ENCODE measurements at regions of chr14 and their contacts with region 1.

Region 1: DNA sequence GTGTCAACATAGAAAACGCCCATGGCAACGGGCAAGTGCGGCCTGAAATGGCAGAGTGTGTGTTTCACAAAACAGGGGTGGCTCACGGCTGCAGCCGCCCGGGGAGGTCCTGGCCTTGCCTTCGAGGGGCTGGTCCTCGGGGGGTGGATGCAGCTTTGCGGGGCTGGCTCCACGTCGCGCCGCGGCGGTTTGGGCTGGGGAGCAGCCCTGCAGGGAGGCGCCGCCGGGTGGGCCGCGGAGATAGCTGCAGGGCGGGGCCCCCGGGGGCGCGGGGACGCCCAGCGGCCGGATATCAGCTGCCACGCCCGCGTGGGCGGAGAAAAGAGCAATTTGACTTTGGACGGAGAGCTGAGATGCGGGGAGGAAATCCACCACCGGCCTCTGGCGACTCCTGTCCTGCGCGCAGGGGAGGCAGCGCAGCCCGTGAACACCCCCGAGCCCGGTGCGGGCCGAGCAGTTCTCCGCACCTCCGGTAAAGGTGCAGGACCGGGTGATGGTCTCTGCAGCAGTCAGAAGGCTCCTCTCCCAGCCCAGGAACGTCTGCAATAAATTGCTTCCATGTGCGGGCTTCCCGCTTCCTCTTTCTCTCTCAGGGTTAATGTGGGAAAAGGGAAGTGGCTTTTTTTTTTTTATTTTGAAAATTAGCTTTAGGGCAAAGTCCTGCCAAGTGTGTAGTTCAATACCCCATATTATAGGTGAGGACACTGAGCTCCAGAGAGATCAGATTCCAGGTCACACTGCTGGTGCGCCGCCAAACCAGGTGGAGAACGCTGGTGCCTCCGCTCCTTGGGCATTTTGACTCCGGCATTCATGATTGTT is 110.5 kb downstream of the ARF6 start:
- DNase-seq: peak; percentile 85
- ATAC-seq: peak; percentile 65
- H3K4me3 Mint-ChIP-seq: peak overlapping the region; percentile 83
- H3K27ac Mint-ChIP-seq: peak overlapping the region; percentile 95
- H3K4me1 Mint-ChIP-seq: peaks cover 79% of the 10 kb centered on the region
- H3K27me3 Mint-ChIP-seq: no peaks in the 10 kb centered on the region
- CTCF ChIP-seq: no peak

Region 2: DNA sequence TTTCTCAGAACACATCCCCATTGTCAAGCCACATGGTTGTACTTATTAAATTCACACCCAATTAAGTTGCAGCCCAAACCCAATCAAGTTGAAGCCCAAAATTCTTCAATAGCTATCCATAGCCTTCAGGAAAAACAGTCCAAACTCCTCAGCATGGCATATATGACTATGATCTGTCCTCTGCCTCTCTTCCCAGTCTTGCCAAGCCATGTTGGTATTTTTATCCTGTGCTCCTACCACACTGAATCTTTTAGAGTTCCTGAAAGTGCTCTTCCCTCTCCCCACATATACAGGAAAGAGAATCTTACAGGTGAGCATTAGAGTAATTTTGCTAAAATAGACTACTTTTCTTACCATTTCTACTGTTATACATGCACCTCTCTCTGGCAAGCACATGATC is 1252.1 kb before region 1 on chr14:
- CTCF ChIA-PET with region 1: no interaction called
- POLR2A ChIA-PET with region 1: no interaction called
- intact Hi-C with region 1: no loop called
- DNase-seq: no peak
- ATAC-seq: no peak
- H3K4me3 Mint-ChIP-seq: no peak overlapping the region
- H3K27ac Mint-ChIP-seq: no peak overlapping the region
- H3K4me1 Mint-ChIP-seq: no peaks in the 10 kb centered on the region
- H3K27me3 Mint-ChIP-seq: no peaks in the 10 kb centered on the region
- CTCF ChIP-seq: no peak

Region 3: DNA sequence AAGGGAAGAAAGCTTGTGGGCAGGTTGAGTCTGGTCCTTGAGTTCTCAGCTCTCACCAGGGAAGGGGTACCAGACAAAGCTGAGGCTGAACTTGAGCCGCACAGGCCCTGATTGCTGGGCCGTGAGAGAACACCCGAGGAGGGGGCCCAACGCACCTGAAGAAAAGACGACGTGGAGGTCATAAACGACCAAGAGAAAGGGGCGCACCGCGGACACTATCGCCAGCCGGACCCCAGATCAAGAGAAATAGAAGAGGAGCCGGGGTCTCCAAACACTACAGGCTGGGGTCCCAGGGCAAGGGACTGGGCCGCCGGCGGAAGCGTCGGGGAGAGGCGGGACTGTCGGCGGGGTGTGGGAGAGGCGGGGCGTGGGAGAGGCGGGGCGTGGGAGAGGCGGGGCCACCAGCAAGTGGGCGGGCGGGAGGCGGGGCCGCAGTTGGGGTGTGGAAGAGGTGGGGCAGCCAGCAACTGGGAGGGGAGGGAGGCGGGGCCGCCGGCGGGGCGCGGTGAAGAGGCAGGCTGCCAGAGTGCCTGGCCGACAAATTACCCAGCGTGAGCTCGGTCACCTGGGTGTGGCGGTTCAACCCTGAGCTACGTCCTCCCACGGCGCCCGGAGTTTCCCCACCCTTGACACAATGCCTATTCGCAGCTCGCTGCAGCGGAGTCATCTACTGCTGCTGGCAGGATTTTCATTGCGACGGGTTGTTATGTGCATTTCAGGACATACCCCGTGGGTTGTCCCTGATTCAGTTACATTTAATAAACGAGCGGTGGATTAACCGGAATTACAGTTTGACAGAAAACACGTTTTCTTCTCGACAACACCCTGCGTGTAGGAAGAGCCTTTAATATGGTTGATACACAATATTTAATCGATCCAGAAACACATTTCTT is 135.3 kb before region 1 on chr14:
- CTCF ChIA-PET with region 1: interaction called, 90 read pairs
- POLR2A ChIA-PET with region 1: interaction called, 190 read pairs
- intact Hi-C with region 1: loop called (anchors 1 kb)
- DNase-seq: peak; percentile 85
- ATAC-seq: peak; percentile 84
- H3K4me3 Mint-ChIP-seq: peak overlapping the region; percentile 95
- H3K27ac Mint-ChIP-seq: peak overlapping the region; percentile 100
- H3K4me1 Mint-ChIP-seq: peaks cover 44% of the 10 kb centered on the region
- H3K27me3 Mint-ChIP-seq: no peaks in the 10 kb centered on the region
- CTCF ChIP-seq: no peak

Region 4: GRCh38 chr14:49940808-49941421 is 62.5 kb before region 1 on chr14:
- CTCF ChIA-PET with region 1: interaction called, 3 read pairs
- POLR2A ChIA-PET with region 1: interaction called, 12 read pairs
- intact Hi-C with region 1: no loop called
- DNase-seq: no peak
- ATAC-seq: peak; percentile 42
- H3K4me3 Mint-ChIP-seq: peak overlapping the region; percentile 7
- H3K27ac Mint-ChIP-seq: peak overlapping the region; percentile 61
- H3K4me1 Mint-ChIP-seq: peaks cover 42% of the 10 kb centered on the region
- H3K27me3 Mint-ChIP-seq: no peaks in the 10 kb centered on the region
- CTCF ChIP-seq: no peak

Region 5: DNA sequence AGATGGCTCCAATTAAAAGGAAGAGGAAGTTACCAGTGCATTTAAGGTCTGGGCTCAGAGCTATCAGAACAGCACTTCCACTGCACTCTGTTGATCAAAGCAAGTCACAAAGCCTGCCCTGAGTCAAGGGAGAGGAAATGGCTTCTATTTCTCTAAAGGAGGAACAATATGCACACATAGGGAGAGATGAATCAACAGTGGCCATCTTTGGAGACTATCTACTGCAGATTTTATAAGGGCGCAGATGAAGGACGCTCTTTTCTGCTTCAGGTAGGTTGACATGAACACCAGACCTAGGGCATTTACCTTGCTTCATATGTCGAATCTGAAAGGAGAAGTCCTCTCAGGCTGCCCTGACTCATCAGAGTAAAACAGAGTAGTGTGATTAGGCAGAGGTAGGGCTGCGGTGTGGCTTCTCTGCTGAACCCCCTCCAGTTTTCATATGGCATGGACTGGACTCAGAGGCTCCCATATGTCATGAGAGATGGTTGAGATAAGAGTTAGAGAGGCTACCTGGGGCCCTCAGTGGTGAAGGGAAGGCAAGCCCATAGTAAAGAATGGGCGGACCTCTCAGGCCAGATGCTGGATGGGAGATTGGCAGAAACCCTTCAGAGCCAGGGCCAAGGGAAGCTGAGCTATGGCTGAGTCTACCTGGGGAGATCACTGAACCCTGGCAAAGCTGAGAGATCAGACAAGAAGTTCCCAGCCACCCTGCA is 26.1 kb before region 1 on chr14:
- CTCF ChIA-PET with region 1: interaction called, 17 read pairs
- POLR2A ChIA-PET with region 1: interaction called, 301 read pairs
- intact Hi-C with region 1: loop called (anchors 1 kb)
- DNase-seq: no peak
- ATAC-seq: peak; percentile 87
- H3K4me3 Mint-ChIP-seq: peak overlapping the region; percentile 76
- H3K27ac Mint-ChIP-seq: peak overlapping the region; percentile 95
- H3K4me1 Mint-ChIP-seq: peaks cover 88% of the 10 kb centered on the region
- H3K27me3 Mint-ChIP-seq: no peaks in the 10 kb centered on the region
- CTCF ChIP-seq: no peak

Region 6: DNA sequence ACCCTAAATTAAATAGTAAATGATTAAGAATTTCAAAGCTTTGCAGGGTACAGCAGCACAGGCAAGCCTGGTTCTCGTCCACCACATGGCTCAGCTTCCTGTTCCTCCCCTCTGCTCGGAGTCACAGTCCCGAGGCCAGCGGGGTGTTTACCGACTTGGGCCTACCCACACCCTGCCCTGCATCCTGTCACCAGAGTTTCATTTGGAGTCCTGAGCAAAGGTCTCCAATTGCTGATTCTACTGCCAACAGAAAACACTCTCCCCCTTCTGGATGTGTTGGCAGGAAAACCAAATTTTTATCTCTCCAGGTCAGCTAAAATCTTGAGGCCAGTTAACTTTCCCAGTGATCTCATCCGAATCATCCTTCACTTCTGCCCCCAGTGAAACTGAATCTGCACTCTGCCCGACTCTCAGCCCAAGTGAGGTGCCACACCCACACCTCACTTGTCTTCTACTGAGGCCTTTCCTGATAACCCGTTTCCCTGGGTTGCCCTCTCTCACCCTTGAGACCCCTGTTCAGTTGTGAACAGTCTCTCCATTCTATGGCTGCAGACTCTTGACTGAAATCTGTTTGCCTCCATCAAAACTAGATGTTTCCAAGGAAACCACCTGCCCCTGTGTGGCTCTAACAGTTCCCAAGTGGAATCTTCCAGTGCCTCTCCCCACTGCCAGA is 41.8 kb after region 1 on chr14:
- CTCF ChIA-PET with region 1: interaction called, 5 read pairs
- POLR2A ChIA-PET with region 1: interaction called, 32 read pairs
- intact Hi-C with region 1: no loop called
- DNase-seq: no peak
- ATAC-seq: peak; percentile 70
- H3K4me3 Mint-ChIP-seq: peak overlapping the region; percentile 2
- H3K27ac Mint-ChIP-seq: peak overlapping the region; percentile 92
- H3K4me1 Mint-ChIP-seq: peaks cover 71% of the 10 kb centered on the region
- H3K27me3 Mint-ChIP-seq: no peaks in the 10 kb centered on the region
- CTCF ChIP-seq: no peak

Region 7: DNA sequence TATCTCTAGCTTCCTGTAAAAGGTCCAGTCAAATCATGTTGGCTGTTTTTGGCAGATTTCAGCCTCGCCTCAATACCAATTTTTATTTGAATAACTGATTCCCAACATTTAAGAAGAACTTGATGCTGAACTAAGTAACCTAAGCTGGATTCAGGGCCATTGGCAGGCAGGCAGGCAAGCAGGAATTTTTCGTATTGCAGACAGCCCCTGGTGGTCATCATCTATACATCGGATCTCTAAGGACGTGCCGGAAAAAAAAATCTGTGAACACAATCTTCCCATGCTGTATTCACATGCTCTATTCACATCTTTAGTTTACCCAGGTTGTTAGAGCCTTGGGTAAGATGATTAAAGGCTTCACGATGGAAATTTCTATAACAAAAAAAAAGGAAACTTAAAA is 105.9 kb after region 1 on chr14:
- CTCF ChIA-PET with region 1: interaction called, 15 read pairs
- POLR2A ChIA-PET with region 1: interaction called, 18 read pairs
- intact Hi-C with region 1: loop called (anchors 1 kb)
- DNase-seq: no peak
- ATAC-seq: no peak
- H3K4me3 Mint-ChIP-seq: no peak overlapping the region
- H3K27ac Mint-ChIP-seq: peak overlapping the region; percentile 20
- H3K4me1 Mint-ChIP-seq: peaks cover 46% of the 10 kb centered on the region
- H3K27me3 Mint-ChIP-seq: no peaks in the 10 kb centered on the region
- CTCF ChIP-seq: no peak

Measured in activated B cell treated with CpG ODN at 0.5 μM for 24 hours (primary cell).